GM18951 (cell line): ENCODE measurements at regions of chr6 and their contacts with region 1.

Region 1: GRCh38 chr6:36196880-36197548 is 470 bp downstream of the BRPF3 start:
- POLR2A ChIP-seq: peak; percentile 62

Region 2: DNA sequence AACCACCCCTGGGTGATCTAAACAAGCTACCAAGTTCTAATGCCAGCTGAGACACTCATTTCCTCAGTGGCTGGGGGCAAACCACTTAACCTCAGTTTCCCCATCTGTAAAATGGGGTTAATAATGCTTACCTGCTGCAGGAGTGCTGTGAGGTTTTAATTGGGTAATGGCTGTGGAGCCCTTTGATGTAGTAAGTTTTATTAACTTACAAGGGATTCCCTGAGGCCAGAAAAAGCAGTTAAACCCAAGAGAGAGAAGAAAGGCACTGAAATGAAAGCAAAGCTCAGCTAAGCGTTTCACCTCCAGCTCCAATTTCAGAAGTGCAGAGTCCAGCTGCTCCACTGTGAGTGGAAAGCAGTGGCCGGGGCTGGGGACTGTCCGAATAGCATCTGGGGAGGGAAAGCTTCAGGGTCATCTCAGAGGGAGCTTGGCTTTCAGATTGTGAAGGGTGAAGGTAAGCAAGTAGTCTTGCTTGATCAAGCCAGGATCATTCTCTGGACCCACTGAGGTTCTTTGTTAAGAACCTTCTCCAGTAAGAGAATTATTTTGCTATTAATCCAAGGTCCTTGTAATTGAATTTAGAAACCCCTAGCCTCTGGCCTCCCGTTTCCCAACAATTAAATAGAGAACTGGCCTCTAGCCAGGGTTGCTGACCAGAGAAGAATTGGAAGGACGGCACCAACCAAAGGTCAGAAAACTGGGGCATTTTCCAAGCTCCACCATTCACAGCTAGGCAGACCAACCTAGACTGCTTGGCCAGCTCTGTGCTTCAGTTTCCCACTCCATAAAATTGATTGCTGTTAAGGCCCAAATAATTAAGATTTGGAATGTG is 1035.0 kb before region 1 on chr6:
- in situ Hi-C with region 1: no loop called
- POLR2A ChIP-seq: no peak

Region 3: DNA sequence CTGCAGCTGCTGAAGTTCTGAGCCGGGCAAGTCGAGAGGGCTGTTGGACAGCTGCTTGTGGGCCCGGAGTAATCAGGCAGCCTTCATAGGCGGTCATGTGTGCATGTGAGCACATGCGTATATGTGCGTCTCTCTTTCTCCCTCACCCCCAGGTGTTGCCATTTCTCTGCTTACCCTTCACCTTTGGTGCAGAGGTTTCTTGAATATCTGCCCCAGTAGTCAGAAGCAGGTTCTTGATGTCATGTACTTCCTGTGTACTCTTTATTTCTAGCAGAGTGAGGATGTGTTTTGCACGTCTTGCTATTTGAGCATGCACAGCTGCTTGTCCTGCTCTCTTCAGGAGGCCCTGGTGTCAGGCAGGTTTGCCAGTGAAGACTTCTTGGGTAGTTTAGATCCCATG is 87.9 kb before region 1 on chr6:
- in situ Hi-C with region 1: no loop called
- POLR2A ChIP-seq: no peak

Region 4: DNA sequence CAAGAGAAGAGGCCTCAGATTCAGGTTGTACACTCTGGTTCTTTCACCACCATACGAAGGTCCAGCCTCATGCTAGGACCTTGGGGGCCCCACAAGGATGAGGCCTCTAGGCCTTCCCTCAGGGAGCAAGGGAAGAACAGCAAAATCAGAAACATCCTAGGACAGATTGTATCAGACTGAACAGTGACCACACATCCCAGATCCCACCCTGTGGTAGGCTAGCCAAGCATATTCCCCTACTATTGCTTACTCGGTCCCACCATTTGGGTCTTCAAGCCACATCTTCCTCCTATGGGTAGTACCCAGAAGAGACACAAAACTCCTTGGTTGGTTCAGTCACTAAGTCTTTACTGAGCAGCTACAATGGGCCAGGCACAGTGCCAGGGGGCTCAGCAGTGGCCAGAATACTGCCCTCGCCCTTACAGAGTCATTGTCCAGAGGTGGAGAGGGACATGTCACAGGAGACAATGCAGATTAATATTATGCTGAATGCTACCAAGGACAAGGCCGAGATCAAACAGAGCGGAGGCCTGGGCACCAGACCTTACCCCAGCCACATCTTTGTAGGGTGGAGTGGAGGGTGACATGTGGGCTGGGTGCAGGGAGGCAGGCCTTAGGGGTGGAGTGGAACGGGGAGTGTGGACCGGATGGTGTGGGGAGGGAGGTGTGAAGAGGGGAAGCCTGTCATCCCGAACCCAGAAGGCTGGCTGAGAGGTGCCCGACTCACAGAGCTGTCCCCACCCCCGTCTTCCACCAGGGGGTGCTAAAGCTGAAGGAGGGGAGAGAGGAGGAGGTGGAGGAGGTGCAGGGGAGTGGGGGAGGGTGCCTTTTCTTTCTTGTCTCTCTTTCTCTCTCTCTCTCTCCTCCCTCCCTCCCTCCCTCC is 73.5 kb before region 1 on chr6:
- in situ Hi-C with region 1: loop called (anchors 10 kb)
- POLR2A ChIP-seq: no peak